WTC11 (cell line): ENCODE measurements at regions of chr17 and their contacts with region 1.

Region 1: GRCh38 chr17:8057691-8058114 is 18.8 kb downstream of the ALOX15B start:
- DNase-seq: peak; percentile 47
- ATAC-seq: peak; percentile 87
- H3K4me3 Mint-ChIP-seq: peak overlapping the region; percentile 32; the same call in 1 of the 2 replicates
- H3K27ac Mint-ChIP-seq: no peak overlapping the region
- H3K4me1 Mint-ChIP-seq: peaks cover 38% of the 10 kb centered on the region
- H3K27me3 Mint-ChIP-seq: peaks cover 38% of the 10 kb centered on the region
- CTCF ChIP-seq: peak; percentile 62

Region 2: DNA sequence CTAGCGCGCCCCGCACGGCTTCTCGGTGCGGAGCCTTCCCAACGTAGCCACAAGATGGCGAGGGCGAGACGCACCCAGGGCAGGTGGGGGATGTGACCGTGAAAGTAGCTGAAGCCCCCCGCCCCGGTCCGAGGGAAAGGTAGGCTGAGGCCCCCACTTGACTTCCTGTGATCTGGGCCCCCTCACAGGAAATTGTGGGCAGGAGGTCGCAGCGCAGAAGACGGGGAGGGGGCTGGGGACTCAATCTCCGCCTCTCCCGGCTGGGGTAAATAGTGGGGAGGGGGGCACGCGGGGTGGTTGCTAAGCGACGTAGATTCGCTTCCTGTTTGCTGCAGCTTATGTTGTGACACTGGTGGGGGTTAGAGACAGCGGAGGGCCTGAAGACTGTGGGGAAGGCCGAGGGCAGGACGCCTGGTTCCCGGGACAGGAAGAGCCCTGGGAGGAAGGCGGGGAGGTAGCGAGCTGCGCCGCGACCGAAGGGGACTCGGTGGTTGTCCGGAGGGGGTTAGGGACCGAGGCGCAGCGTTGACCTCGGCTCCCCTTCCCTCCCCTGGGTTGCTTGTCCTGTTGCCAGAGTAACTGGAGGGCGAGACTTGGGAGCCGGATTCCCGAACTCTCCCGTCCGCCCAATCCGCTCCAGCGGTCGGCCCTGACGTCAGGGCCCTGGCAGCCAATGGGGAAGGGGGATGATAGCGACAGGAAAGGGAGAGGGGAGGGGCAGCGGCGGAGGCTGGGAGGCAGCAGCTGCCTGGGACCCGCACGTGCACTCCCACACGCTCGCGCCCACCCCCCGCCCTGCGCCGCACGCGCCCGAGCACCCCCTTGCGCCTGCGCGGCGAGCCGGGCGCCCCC is 222.5 kb before region 1 on chr17:
- CTCF ChIA-PET with region 1: interaction called, 13 read pairs
- POLR2A ChIA-PET with region 1: no interaction called
- DNase-seq: peak; percentile 98
- ATAC-seq: peak; percentile 60
- H3K4me3 Mint-ChIP-seq: peak overlapping the region; percentile 93
- H3K27ac Mint-ChIP-seq: peak overlapping the region; percentile 86
- H3K4me1 Mint-ChIP-seq: peaks cover 34% of the 10 kb centered on the region
- H3K27me3 Mint-ChIP-seq: peaks cover 54% of the 10 kb centered on the region
- CTCF ChIP-seq: peak; percentile 45

Region 3: GRCh38 chr17:7915611-7916382 is 141.9 kb before region 1 on chr17 and contains the start of gene RNF227:
- CTCF ChIA-PET with region 1: interaction called, 30 read pairs
- POLR2A ChIA-PET with region 1: interaction called, 5 read pairs
- DNase-seq: peak; percentile 90
- ATAC-seq: peak; percentile 94
- H3K4me3 Mint-ChIP-seq: peak within 1 kb of the TSS; percentile 72
- H3K27ac Mint-ChIP-seq: no peak within 1 kb of the TSS
- H3K4me1 Mint-ChIP-seq: peaks cover 13% of the 10 kb centered on the region
- H3K27me3 Mint-ChIP-seq: peaks cover 70% of the 10 kb centered on the region
- CTCF ChIP-seq: no peak
- total RNA-seq, gene RNF227: 0.83 to 1.8 TPM (median 0.94 TPM) in 3 replicates

Region 4: DNA sequence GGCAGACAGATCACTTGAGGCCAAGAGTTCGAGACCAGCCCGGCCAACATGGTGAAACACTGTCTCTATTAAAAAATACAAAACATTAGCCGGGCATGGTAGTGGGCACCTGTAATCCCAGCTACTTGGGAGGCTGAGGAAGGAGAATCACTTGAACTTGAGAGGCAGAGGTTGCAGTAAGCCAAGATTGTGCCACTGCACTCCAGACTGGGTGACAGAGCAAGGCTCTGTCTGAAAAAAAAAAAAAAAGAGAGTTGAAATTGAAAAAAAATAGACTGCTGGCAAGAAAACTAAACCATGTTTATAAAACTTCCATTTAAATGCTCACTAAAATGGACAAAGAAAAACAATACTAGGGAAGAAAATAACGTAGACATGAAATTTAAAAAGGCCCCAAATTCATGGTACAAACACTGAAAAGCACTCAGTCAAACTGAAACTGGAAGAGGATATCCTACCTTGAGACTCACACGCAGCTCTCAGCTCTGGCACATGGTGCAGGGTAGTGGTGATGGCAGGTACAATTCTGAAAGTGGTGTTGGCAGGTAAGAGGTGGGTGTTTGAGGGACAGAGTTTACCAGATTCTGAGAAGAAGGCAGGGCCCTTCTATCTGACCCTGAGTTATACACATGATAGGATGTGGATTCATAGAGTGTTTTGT is 106.4 kb before region 1 on chr17:
- CTCF ChIA-PET with region 1: no interaction called
- POLR2A ChIA-PET with region 1: no interaction called
- DNase-seq: no peak
- ATAC-seq: no peak
- H3K4me3 Mint-ChIP-seq: no peak overlapping the region
- H3K27ac Mint-ChIP-seq: no peak overlapping the region
- H3K4me1 Mint-ChIP-seq: no peaks in the 10 kb centered on the region
- H3K27me3 Mint-ChIP-seq: no peaks in the 10 kb centered on the region
- CTCF ChIP-seq: no peak

Region 5: DNA sequence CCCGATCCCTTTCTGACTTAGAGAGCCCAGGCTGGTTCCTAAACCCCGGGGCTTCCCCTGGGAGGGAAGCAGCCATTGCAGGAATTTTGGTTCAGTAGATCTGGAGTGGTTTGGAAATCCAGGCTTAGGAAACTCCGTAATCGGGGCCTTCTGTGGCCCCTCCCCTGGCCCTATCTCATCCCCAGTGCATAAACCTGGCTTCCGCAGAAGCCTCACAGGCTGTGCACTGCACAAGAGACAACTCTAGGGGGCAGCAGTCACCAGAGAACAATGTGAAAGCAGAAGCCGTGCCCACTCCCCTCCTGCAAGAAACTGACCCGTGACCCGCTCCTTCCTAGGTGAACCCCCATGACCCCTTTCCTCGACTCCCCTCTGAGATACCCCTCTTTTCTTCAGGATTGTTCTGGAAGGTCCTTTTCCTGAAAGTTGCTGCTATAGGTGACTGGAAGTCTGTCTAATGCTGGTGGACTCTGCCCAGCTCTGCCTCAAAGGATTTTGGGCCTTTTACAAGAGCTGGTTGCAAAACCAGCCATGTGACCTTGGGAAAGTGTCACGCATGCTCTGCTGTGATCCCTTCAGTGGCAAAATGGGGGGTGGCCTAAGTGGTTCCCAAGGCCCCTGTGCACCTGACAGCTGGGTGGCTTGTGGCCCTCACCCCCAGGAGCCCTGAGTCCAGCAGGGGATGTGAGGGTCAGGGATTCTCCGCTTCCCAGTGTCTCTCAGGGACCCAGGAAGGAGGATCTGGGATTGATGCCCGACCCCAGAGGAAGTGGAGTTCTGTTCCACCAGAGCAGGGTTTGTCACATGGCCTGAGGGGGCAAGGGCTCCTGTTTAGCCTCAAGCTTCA is 40.8 kb before region 1 on chr17:
- CTCF ChIA-PET with region 1: interaction called, 53 read pairs
- POLR2A ChIA-PET with region 1: no interaction called
- DNase-seq: peak; percentile 92
- ATAC-seq: peak; percentile 90
- H3K4me3 Mint-ChIP-seq: peak overlapping the region; percentile 84
- H3K27ac Mint-ChIP-seq: no peak overlapping the region
- H3K4me1 Mint-ChIP-seq: 0 out of 2 replicates have a peak, but pooled peaks cover 2% of the 10 kb centered on the region
- H3K27me3 Mint-ChIP-seq: peaks cover 23% of the 10 kb centered on the region
- CTCF ChIP-seq: peak; percentile 85

Region 6: GRCh38 chr17:8079291-8080207 is 21.8 kb after region 1 on chr17:
- CTCF ChIA-PET with region 1: interaction called, 380 read pairs
- POLR2A ChIA-PET with region 1: no interaction called
- DNase-seq: peak; percentile 86
- ATAC-seq: peak; percentile 82
- H3K4me3 Mint-ChIP-seq: peak overlapping the region; percentile 87
- H3K27ac Mint-ChIP-seq: no peak overlapping the region
- H3K4me1 Mint-ChIP-seq: peaks cover 15% of the 10 kb centered on the region
- H3K27me3 Mint-ChIP-seq: peaks cover 84% of the 10 kb centered on the region
- CTCF ChIP-seq: peak; percentile 85

Region 7: GRCh38 chr17:8109661-8110464 is 52.2 kb after region 1 on chr17:
- CTCF ChIA-PET with region 1: interaction called, 56 read pairs
- POLR2A ChIA-PET with region 1: no interaction called
- DNase-seq: peak; percentile 90
- ATAC-seq: peak; percentile 87
- H3K4me3 Mint-ChIP-seq: peak overlapping the region; percentile 71
- H3K27ac Mint-ChIP-seq: no peak overlapping the region
- H3K4me1 Mint-ChIP-seq: peaks cover 4% of the 10 kb centered on the region; the same call in 1 of the 2 replicates
- H3K27me3 Mint-ChIP-seq: peaks cover 79% of the 10 kb centered on the region
- CTCF ChIP-seq: peak; percentile 85

Region 8: GRCh38 chr17:8143764-8144719 is 86.3 kb after region 1 on chr17:
- CTCF ChIA-PET with region 1: no interaction called
- POLR2A ChIA-PET with region 1: no interaction called
- DNase-seq: no peak
- ATAC-seq: no peak
- H3K4me3 Mint-ChIP-seq: no peak overlapping the region
- H3K27ac Mint-ChIP-seq: no peak overlapping the region; the same call in 1 of the 2 replicates
- H3K4me1 Mint-ChIP-seq: no peaks in the 10 kb centered on the region
- H3K27me3 Mint-ChIP-seq: no peaks in the 10 kb centered on the region
- CTCF ChIP-seq: no peak

Region 9: GRCh38 chr17:8156246-8156992 is 98.7 kb after region 1 on chr17:
- CTCF ChIA-PET with region 1: interaction called, 14 read pairs
- POLR2A ChIA-PET with region 1: interaction called, 6 read pairs
- DNase-seq: peak; percentile 100
- ATAC-seq: peak; percentile 67
- H3K4me3 Mint-ChIP-seq: no peak overlapping the region
- H3K27ac Mint-ChIP-seq: no peak overlapping the region
- H3K4me1 Mint-ChIP-seq: peaks cover 32% of the 10 kb centered on the region
- H3K27me3 Mint-ChIP-seq: peaks cover 3% of the 10 kb centered on the region; the same call in 1 of the 2 replicates
- CTCF ChIP-seq: no peak